Activated CD4-positive, alpha-beta T cell treated with anti-CD3 and anti-CD28 coated beads for 36 hours (primary cell): ENCODE measurements at regions of chr1 and their contacts with region 1.

Region 1: GRCh38 chr1:2194898-2195673 is 514 bp upstream of the FAAP20 start:
- DNase-seq: peak; percentile 93
- ATAC-seq: peak; percentile 67
- H3K4me3 Mint-ChIP-seq: peak overlapping the region; percentile 77
- H3K27ac Mint-ChIP-seq: peak overlapping the region; percentile 86
- H3K4me1 Mint-ChIP-seq: peaks cover 32% of the 10 kb centered on the region
- H3K27me3 Mint-ChIP-seq: no peaks in the 10 kb centered on the region

Region 2: DNA sequence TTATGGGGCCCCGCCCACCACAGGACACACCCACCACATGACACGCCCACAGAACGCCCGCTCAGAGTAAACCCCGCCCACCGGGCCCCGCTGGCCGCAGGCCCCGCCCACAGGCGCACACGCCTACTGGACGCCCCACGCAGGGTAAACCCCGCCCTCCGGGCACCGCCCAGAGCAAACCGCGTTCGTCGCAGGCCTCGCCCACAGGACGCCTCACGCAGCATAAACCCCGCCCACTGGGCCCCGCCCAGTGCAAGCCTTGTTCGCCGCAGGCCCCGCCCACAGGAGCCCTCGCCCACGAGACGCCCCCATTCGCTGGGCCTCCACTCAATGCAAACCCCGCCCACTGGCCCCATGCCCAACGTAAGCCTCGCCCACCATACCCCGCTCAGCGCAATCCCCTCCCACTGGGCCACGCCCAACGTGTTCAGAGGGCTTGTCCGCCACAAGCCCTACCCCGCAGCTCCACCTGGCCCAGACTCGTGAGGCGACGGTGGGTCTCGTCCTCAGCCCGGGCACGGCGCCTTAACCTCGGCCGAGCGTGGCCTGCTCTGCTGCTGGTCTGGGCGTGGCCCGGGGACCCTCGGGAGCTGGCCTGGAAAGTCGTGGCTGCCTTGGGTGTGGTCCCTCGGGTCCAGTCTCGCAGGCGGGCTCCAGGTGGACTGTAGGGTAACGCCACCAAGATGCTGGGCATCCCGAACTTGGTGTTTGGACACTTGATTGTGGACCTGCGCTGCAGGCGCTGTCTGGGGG is 275.6 kb before region 1 on chr1:
- CTCF ChIA-PET with region 1: no interaction called
- POLR2A ChIA-PET with region 1: no interaction called
- intact Hi-C with region 1: loop called in 1 of 2 experiments (anchors 1 kb)
- DNase-seq: peak; percentile 100
- ATAC-seq: peak; percentile 92
- H3K4me3 Mint-ChIP-seq: peak overlapping the region; percentile 62
- H3K27ac Mint-ChIP-seq: no peak overlapping the region
- H3K4me1 Mint-ChIP-seq: peaks cover 4% of the 10 kb centered on the region
- H3K27me3 Mint-ChIP-seq: no peaks in the 10 kb centered on the region

Region 3: DNA sequence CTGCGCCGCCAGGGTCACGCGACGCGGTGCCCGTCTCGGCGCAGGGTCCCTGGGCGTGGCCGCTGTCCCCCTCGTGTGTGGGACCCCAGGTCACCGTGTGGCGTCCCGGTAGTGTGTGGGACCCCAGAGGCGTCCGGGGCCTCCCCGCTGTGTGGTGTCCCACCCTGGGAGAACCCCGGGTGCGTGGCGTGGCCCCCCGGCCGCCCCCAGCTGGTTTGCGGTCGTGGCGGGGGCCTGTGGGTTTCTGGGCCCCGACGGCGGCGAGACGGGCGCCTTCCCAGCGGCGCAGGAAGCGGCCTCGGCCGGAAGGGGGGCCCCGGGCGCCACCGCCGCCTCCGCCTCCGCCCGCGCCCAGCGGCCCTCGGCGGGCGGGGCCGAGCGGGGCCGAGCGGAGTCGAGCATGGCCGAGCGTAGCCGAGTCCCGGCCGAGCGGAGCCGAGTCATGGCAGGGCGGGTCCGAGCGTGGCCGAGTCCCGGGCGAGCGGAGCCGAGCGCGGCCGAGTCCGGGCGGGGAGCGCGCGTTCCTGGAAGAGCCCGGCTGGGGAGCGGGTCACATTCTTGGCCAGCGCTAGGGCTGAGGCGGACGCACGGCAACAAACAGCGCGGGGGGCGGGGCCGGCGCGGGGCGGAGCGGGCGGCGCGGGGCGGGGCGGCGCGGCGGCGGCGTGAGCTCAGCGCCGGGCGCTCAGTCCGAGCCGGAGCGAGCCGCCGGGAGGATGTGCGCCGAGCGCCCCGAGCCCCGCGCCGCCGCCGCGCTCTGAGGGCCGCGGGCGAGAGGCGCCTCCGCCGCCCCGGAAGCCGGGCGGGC is 32.5 kb after region 1 on chr1:
- CTCF ChIA-PET with region 1: interaction called, 4 read pairs
- POLR2A ChIA-PET with region 1: interaction called, 6 read pairs
- intact Hi-C with region 1: loop called in 1 of 2 experiments (anchors 1 kb)
- DNase-seq: peak; percentile 98
- ATAC-seq: peak; percentile 94
- H3K4me3 Mint-ChIP-seq: peak overlapping the region; percentile 32
- H3K27ac Mint-ChIP-seq: no peak overlapping the region
- H3K4me1 Mint-ChIP-seq: peaks cover 6% of the 10 kb centered on the region
- H3K27me3 Mint-ChIP-seq: no peaks in the 10 kb centered on the region

Region 4: GRCh38 chr1:2290595-2291510 is 95.8 kb after region 1 on chr1:
- CTCF ChIA-PET with region 1: no interaction called
- POLR2A ChIA-PET with region 1: no interaction called
- intact Hi-C with region 1: loop called in 1 of 2 experiments (anchors 2 kb)
- DNase-seq: peak; percentile 94
- ATAC-seq: peak; percentile 89
- H3K4me3 Mint-ChIP-seq: peak overlapping the region; percentile 75
- H3K27ac Mint-ChIP-seq: peak overlapping the region; percentile 95
- H3K4me1 Mint-ChIP-seq: peaks cover 87% of the 10 kb centered on the region
- H3K27me3 Mint-ChIP-seq: no peaks in the 10 kb centered on the region

Region 5: GRCh38 chr1:2314803-2315673 is 120.0 kb after region 1 on chr1:
- CTCF ChIA-PET with region 1: interaction called, 5 read pairs
- POLR2A ChIA-PET with region 1: no interaction called
- intact Hi-C with region 1: loop called in 1 of 2 experiments (anchors 1 kb)
- DNase-seq: peak; percentile 71
- ATAC-seq: peak; percentile 20
- H3K4me3 Mint-ChIP-seq: peak overlapping the region; percentile 21
- H3K27ac Mint-ChIP-seq: peak overlapping the region; percentile 58
- H3K4me1 Mint-ChIP-seq: peaks cover 9% of the 10 kb centered on the region
- H3K27me3 Mint-ChIP-seq: no peaks in the 10 kb centered on the region

Region 6: DNA sequence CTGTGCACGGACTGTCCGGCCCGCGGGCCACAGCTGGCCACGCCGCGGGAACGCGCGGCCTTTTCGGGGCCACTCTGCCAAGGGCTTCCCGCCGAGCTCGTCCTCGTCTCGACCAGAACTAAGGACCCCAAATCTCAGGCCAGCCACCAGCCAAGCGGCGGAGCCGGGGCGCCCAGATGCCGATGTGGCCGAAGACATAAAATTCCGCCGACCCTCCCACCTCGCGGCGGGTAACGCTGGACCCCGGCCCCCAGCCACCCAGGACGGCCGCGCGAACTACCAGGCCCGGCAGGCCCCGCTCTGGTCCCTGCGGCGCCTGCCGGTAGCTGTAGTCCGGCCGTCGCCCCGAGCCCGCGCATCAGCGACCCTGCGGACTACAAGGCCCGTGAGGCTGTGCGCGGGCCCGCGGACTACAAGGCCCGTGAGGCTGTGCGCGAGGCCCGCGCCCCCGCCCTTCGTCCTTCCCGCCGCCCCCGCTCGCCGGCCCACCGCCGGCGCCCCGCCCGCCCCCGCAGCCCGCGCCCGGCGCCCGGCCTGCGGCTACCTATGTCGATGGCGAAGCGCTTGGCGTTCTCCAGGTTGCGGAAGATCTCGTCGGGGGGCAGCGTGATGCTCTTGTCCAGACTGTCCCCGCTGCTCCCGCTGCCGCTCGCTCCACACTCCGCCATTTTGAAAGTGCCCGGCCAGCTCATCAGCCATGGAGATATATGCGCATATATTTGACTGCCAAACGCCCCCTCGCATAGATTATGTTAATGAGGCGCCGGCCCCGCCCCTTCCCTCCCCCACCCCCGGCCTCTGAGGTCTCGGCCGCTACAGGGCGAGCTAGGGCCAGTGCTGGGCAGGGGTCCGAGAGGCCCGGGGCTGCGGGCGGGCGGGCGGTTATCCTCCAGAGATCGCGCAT is 331.1 kb after region 1 on chr1 and contains the start of gene PANK4:
- CTCF ChIA-PET with region 1: no interaction called
- POLR2A ChIA-PET with region 1: no interaction called
- intact Hi-C with region 1: loop called in 1 of 2 experiments (anchors 2 kb)
- DNase-seq: peak; percentile 96
- ATAC-seq: peak; percentile 87
- H3K4me3 Mint-ChIP-seq: peak within 1 kb of the TSS; percentile 77
- H3K27ac Mint-ChIP-seq: peak within 1 kb of the TSS; percentile 91
- H3K4me1 Mint-ChIP-seq: peaks cover 43% of the 10 kb centered on the region
- H3K27me3 Mint-ChIP-seq: peaks cover 3% of the 10 kb centered on the region
- total RNA-seq, gene PANK4: 32.4 to 39.2 TPM

Region 7: DNA sequence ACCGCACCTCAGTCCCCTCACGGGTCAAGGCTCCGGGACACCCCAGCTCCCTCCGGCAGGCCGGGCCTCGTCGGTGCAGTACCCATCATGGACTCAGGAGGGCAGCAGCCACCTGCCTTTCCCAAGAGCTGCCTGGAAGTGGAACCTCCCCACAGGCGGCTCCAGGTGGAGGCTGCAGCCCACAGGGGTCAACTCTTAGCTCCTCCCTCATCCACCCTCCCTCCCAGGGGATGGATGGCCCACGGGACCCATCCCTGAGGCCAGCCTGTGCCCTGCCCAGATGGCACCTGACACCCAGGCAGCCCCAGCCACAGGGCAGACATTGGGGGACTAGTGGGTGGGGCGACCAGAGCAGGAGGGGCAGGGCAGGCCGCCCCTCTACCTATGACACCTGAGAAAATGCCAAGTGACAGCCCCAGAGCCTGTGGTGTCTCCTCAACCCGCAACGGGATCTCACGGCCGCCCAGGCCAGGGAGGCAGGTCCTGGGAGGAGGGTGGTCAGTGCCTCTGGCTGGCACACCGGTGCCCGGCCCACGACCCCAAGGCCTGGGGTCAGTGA is 1258.2 kb after region 1 on chr1:
- CTCF ChIA-PET with region 1: no interaction called
- POLR2A ChIA-PET with region 1: no interaction called
- intact Hi-C with region 1: no loop called
- DNase-seq: peak; percentile 87
- ATAC-seq: peak; percentile 89
- H3K4me3 Mint-ChIP-seq: no peak overlapping the region
- H3K27ac Mint-ChIP-seq: no peak overlapping the region
- H3K4me1 Mint-ChIP-seq: peaks cover 3% of the 10 kb centered on the region
- H3K27me3 Mint-ChIP-seq: peaks cover 2% of the 10 kb centered on the region